HCT116 (cell line): ENCODE measurements at regions of chr10 and their contacts with region 1.

Region 1: GRCh38 chr10:128069351-128070051 is 56.7 kb downstream of the MKI67 start:
- DNase-seq: peak; percentile 57
- ATAC-seq: peak; percentile 88
- H3K4me3 ChIP-seq: no peak overlapping the region
- H3K27ac ChIP-seq: no peak overlapping the region
- H3K4me1 ChIP-seq: peaks cover 0 to 6% of the 10 kb centered on the region in 2 experiments; a peak in 1 of 4 replicates
- H3K27me3 ChIP-seq: no peaks in the 10 kb centered on the region
- CTCF ChIP-seq: peak; percentile 73 to 95 (median 91)
- POLR2A ChIP-seq: no peak
- RAD21 ChIP-seq: peak; percentile 98

Region 2: GRCh38 chr10:127492607-127493250 is 576.8 kb before region 1 on chr10:
- CTCF ChIA-PET with region 1: interaction called, 3 read pairs
- POLR2A ChIA-PET with region 1: no interaction called
- RAD21 ChIA-PET with region 1: no interaction called
- intact Hi-C with region 1: loop called (anchors 5 kb)
- DNase-seq: peak; percentile 24
- ATAC-seq: peak; percentile 98
- H3K4me3 ChIP-seq: no peak overlapping the region
- H3K27ac ChIP-seq: no peak overlapping the region
- H3K4me1 ChIP-seq: no peaks in the 10 kb centered on the region
- H3K27me3 ChIP-seq: peaks cover 53% of the 10 kb centered on the region
- CTCF ChIP-seq: peak; percentile 71 to 86 (median 71)
- POLR2A ChIP-seq: no peak
- RAD21 ChIP-seq: peak; percentile 55

Region 3: DNA sequence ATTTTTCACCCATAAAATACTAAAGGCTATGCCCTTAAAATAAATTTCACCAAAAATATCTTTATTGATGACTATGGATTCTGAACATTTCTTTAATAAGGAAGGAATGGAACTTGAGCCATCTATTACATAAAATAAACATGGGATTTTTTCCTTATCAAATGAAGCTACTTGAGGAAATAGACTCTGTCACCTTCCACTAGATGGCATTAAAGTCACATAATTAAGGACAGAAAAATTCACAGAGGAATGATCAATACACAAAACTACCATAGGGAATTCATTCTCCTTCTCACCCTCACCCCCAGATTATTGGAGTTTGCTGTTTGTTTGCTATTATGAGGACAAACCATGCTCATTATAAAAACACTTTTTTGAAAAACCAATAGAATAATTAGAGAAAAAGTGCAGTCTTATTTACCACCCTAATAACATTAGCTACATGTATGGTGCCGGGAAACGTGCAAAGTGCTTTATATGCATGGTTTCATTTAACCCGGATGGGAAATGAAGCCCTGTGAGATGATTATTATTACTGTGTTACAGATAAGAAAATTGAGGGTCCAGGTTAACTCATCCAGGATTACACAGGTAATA is 353.6 kb before region 1 on chr10:
- CTCF ChIA-PET with region 1: interaction called, 15 read pairs
- POLR2A ChIA-PET with region 1: no interaction called
- RAD21 ChIA-PET with region 1: no interaction called
- intact Hi-C with region 1: loop called (anchors 2 kb)
- DNase-seq: peak; percentile 46
- ATAC-seq: peak; percentile 68
- H3K4me3 ChIP-seq: no peak overlapping the region
- H3K27ac ChIP-seq: no peak overlapping the region
- H3K4me1 ChIP-seq: no peaks in the 10 kb centered on the region
- H3K27me3 ChIP-seq: peaks cover 36% of the 10 kb centered on the region
- CTCF ChIP-seq: peak; percentile 41 to 73 (median 65); a peak in 5 of 6 replicates
- POLR2A ChIP-seq: no peak
- RAD21 ChIP-seq: peak; percentile 78

Region 4: GRCh38 chr10:127906548-127907377 is 162.7 kb before region 1 on chr10 and contains the start of gene PTPRE:
- CTCF ChIA-PET with region 1: interaction called, 16 read pairs
- POLR2A ChIA-PET with region 1: interaction called, 5 read pairs
- RAD21 ChIA-PET with region 1: interaction called, 5 to 11 read pairs
- intact Hi-C with region 1: loop called (anchors 1 kb)
- DNase-seq: peak; percentile 40
- ATAC-seq: peak; percentile 92
- H3K4me3 ChIP-seq: peak within 1 kb of the TSS; percentile 44 to 62
- H3K27ac ChIP-seq: peak within 1 kb of the TSS; percentile 56; the same call in 1 of the 2 replicates
- H3K4me1 ChIP-seq: peaks cover 25 to 46% of the 10 kb centered on the region in 2 experiments
- H3K27me3 ChIP-seq: no peaks in the 10 kb centered on the region
- CTCF ChIP-seq: peak; percentile 64 to 78 (median 67)
- POLR2A ChIP-seq: no peak
- RAD21 ChIP-seq: peak; percentile 93
- total RNA-seq, gene PTPRE: 12.3 TPM

Region 5: GRCh38 chr10:128011175-128011979 is 58.1 kb before region 1 on chr10:
- CTCF ChIA-PET with region 1: interaction called, 27 read pairs
- POLR2A ChIA-PET with region 1: no interaction called
- RAD21 ChIA-PET with region 1: interaction called, 5 to 8 read pairs
- intact Hi-C with region 1: loop called (anchors 1 kb)
- DNase-seq: peak; percentile 54
- ATAC-seq: peak; percentile 95
- H3K4me3 ChIP-seq: no peak overlapping the region; a peak in 1 of 4 replicates
- H3K27ac ChIP-seq: no peak overlapping the region
- H3K4me1 ChIP-seq: peaks cover 3 to 9% of the 10 kb centered on the region in 2 experiments; a peak in 3 of 4 replicates
- H3K27me3 ChIP-seq: no peaks in the 10 kb centered on the region; the same call in 1 of the 2 replicates
- CTCF ChIP-seq: peak; percentile 98 to 99 (median 99)
- POLR2A ChIP-seq: no peak
- RAD21 ChIP-seq: peak; percentile 100

Region 6: GRCh38 chr10:128035557-128035973 is 33.9 kb before region 1 on chr10:
- CTCF ChIA-PET with region 1: interaction called, 47 read pairs
- POLR2A ChIA-PET with region 1: no interaction called
- RAD21 ChIA-PET with region 1: interaction called, 3 to 6 read pairs
- intact Hi-C with region 1: loop called (anchors 1 kb)
- DNase-seq: peak; percentile 21
- ATAC-seq: peak; percentile 88
- H3K4me3 ChIP-seq: no peak overlapping the region
- H3K27ac ChIP-seq: no peak overlapping the region
- H3K4me1 ChIP-seq: peaks cover 7 to 13% of the 10 kb centered on the region in 2 experiments; a peak in 3 of 4 replicates
- H3K27me3 ChIP-seq: no peaks in the 10 kb centered on the region
- CTCF ChIP-seq: peak; percentile 75 to 98 (median 97)
- POLR2A ChIP-seq: no peak
- RAD21 ChIP-seq: peak; percentile 81

Region 7: DNA sequence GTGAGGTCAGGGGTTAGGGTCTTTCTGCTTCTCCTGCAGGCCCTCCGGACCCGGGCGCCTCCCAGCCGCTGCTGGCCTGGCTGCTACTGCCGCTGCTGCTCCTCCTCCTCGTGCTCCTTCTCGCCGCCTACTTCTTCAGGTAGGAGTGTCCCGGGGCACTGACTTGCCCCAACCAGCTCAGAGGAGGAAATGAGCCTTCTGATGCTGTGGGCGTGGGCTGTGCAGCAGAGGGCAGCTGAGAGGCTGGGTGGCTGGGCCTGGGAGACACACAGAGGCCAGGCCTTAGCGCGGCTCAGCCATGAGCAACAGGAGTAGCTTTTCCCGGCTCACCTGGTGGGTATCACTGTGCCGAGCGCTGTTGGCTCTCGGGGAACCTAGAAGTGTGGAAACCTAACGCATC is 22.1 kb before region 1 on chr10:
- CTCF ChIA-PET with region 1: interaction called, 19 read pairs
- POLR2A ChIA-PET with region 1: no interaction called
- RAD21 ChIA-PET with region 1: interaction called in 1 of 2 experiments, 3 read pairs
- intact Hi-C with region 1: no loop called
- DNase-seq: peak; percentile 88
- ATAC-seq: peak; percentile 100
- H3K4me3 ChIP-seq: peak overlapping the region; percentile 43 to 52
- H3K27ac ChIP-seq: peak overlapping the region; percentile 34; the same call in 1 of the 2 replicates
- H3K4me1 ChIP-seq: peaks cover 10 to 23% of the 10 kb centered on the region in 2 experiments; a peak in 3 of 4 replicates
- H3K27me3 ChIP-seq: no peaks in the 10 kb centered on the region
- CTCF ChIP-seq: no peak
- POLR2A ChIP-seq: peak; percentile 61
- RAD21 ChIP-seq: no peak